Activated T-helper 1 cell treated with anti-CD3 and anti-CD28 coated beads, Interleukin-12 subunit alpha, Interleukin-12 subunit beta, Interleukin-2, Interleukin-4 antibody, amounts not matched to agents 30 ng/mL and 10 ng/mL and 1 ng/mL, durations not matched to agents 14 hours and 24 hours and 36 hours (primary cell): ENCODE measurements at regions of chr10 and their contacts with region 1.

Region 1: GRCh38 chr10:119080521-119081260 is at the start of gene EIF3A:
- DNase-seq: peak; percentile 94
- H3K4me3 Mint-ChIP-seq: peak within 1 kb of the TSS; percentile 98
- H3K27ac Mint-ChIP-seq: peak within 1 kb of the TSS; percentile 94
- H3K4me1 Mint-ChIP-seq: peaks cover 33% of the 10 kb centered on the region
- H3K27me3 Mint-ChIP-seq: no peaks in the 10 kb centered on the region
- total RNA-seq, gene EIF3A: 181 and 183 TPM in 2 replicates

Region 2: GRCh38 chr10:118742782-118743181 is 337.9 kb before region 1 on chr10:
- intact Hi-C with region 1: no loop called
- DNase-seq: no peak
- H3K4me3 Mint-ChIP-seq: no peak overlapping the region
- H3K27ac Mint-ChIP-seq: no peak overlapping the region
- H3K4me1 Mint-ChIP-seq: peaks cover 33% of the 10 kb centered on the region
- H3K27me3 Mint-ChIP-seq: no peaks in the 10 kb centered on the region

Region 3: DNA sequence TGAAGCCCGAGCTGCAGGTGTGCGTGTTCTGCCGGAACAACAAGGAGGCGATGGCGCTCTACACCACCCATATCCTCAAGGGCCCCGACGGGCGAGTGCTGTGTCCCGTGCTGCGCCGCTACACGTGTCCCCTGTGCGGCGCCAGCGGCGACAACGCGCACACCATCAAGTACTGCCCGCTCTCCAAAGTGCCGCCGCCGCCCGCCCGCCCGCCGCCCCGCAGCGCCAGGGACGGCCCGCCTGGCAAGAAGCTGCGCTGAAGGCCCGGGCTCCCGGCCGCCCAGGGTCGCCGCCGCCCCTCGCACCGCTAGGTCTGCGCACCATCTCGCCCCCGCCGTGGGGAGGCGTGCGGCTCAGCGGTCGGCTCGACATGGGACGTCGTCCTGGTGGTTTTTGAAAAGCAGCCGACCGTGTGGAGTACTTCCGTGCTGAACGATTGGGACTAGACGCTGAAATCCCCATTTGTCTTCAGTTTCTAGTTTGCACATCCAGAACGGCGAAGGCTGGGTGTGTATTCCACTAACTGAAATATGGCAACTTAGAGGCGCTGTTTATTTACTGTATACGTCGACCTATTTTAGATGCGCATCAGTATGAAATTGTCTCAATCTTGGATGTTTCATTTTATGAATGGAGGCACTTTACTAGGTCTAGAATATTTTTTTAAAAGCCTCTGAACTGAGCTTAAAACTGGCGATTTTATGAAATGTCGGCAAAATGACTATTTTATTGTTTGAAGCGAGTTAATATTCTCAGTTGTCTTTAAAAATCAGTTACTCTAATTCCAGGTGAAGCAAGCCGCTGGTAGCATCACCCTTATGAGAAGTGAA is 50.1 kb before region 1 on chr10:
- intact Hi-C with region 1: loop called (anchors 1 kb)
- DNase-seq: peak; percentile 39
- H3K4me3 Mint-ChIP-seq: peak overlapping the region; percentile 73
- H3K27ac Mint-ChIP-seq: peak overlapping the region; percentile 40
- H3K4me1 Mint-ChIP-seq: peaks cover 25% of the 10 kb centered on the region
- H3K27me3 Mint-ChIP-seq: peaks cover 7% of the 10 kb centered on the region

Region 4: DNA sequence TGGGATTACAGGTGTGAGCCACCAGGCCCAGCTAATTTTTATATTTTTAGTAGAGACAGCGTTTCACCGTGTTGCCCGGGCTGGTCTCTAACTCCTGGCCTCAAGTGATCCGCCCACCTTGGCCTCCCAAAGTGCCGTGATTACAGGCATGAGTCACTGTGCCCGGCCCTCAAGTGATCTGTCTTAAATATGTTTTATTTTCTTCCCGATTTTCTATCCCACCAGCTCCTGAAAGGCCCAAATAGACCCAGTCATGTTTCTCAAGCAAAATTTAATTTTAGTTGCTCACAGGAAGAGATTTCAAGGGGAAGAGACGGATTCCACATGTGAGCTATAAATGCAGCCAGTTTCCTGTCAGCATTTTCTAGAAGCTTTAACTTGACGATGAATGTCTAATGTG is 35.2 kb after region 1 on chr10:
- intact Hi-C with region 1: loop called (anchors 5 kb)
- DNase-seq: no peak
- H3K4me3 Mint-ChIP-seq: no peak overlapping the region
- H3K27ac Mint-ChIP-seq: no peak overlapping the region
- H3K4me1 Mint-ChIP-seq: no peaks in the 10 kb centered on the region
- H3K27me3 Mint-ChIP-seq: no peaks in the 10 kb centered on the region

Region 5: GRCh38 chr10:119178372-119179119 is 97.9 kb after region 1 on chr10 and contains the start of gene PRDX3:
- intact Hi-C with region 1: loop called (anchors 1 kb)
- DNase-seq: peak; percentile 89
- H3K4me3 Mint-ChIP-seq: peak within 1 kb of the TSS; percentile 100
- H3K27ac Mint-ChIP-seq: peak within 1 kb of the TSS; percentile 100
- H3K4me1 Mint-ChIP-seq: peaks cover 30% of the 10 kb centered on the region
- H3K27me3 Mint-ChIP-seq: no peaks in the 10 kb centered on the region
- total RNA-seq, gene PRDX3: 158 and 163 TPM in 2 replicates

Region 6: DNA sequence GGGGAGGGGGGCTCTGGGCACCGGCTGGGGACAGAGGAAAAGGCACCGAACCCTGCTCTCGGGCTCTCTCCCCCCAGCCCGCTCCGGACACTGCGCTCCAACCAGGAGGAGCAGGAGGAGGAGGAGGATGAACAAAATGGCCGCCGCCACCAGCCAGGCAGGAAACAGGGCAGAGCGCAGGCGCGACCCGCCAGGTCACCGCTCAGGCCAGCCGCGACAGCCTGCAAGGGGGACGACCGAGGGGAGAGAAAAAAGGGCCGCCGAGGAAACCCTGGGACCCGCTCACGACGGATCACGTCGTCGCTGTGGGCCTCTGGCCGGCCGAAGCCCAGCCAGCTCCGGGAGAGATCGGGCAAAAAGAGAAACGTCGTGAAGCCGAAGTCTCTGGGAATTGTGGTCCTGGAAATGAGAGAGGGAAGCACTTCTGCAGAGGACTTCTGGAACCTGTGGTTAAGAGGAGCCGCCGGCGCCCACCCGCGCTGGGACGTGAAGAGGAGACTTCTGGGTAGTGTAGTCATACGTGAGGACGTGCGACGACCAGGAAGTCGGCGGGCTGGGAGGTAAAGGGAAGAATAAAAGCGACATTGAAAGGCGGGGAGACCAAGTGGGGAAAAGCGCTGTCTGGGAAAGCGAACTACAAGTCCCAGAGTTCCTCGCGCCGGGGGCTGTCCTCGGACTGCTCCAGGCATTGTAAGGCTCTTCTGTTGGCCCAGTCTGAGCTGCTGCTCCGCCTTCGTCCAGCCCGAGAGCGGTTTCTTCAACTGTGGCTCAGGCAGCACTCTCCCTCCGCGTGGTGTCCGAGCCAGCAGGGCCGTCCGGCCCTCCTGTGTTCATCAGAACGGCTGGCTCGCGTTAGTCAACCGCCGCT is 516.1 kb after region 1 on chr10 and contains the start of gene TIAL1:
- intact Hi-C with region 1: loop called (anchors 1 kb)
- DNase-seq: peak; percentile 92
- H3K4me3 Mint-ChIP-seq: peak within 1 kb of the TSS; percentile 91
- H3K27ac Mint-ChIP-seq: peak within 1 kb of the TSS; percentile 98
- H3K4me1 Mint-ChIP-seq: peaks cover 51% of the 10 kb centered on the region
- H3K27me3 Mint-ChIP-seq: no peaks in the 10 kb centered on the region
- total RNA-seq, gene TIAL1: 192 and 195 TPM in 2 replicates

Region 7: GRCh38 chr10:119872860-119873681 is 792.4 kb after region 1 on chr10:
- intact Hi-C with region 1: loop called (anchors 10 kb)
- DNase-seq: peak; percentile 87
- H3K4me3 Mint-ChIP-seq: peak overlapping the region; percentile 84
- H3K27ac Mint-ChIP-seq: peak overlapping the region; percentile 80
- H3K4me1 Mint-ChIP-seq: peaks cover 34% of the 10 kb centered on the region
- H3K27me3 Mint-ChIP-seq: no peaks in the 10 kb centered on the region